Sciatic nerve (tissue), 2 donors: ENCODE measurements at regions of chr18 and their contacts with region 1.

Region 1: GRCh38 chr18:45951016-45951714 is 16.0 kb downstream of the EPG5 start:
- DNase-seq: no peak
- ATAC-seq: no peak

Region 2: GRCh38 chr18:45916302-45916701 is 34.9 kb before region 1 on chr18:
- intact Hi-C with region 1: loop called (anchors 1 kb)
- DNase-seq: no peak
- ATAC-seq: no peak

Region 3: GRCh38 chr18:46510386-46510785 is 559.2 kb after region 1 on chr18:
- intact Hi-C with region 1: no loop called
- DNase-seq: no peak
- ATAC-seq: no peak